Gastrocnemius medialis (tissue), 4 donors: ENCODE measurements at regions of chr2 and their contacts with region 1.

Region 1: GRCh38 chr2:19347619-19348562 is 10.5 kb downstream of the OSR1 start:
- DNase-seq: peak; percentile 85 to 93
- ATAC-seq: peak; percentile 96 to 97
- H3K4me3 ChIP-seq: peak overlapping the region; percentile 89 to 97 (median 94)
- H3K27ac ChIP-seq: peak overlapping the region; percentile 91 to 97 (median 95)
- H3K4me1 ChIP-seq: peaks cover 11 to 13% of the 10 kb centered on the region in 2 donors
- H3K27me3 ChIP-seq: peaks cover 0 to 3% (median 0%) of the 10 kb centered on the region in 3 donors
- CTCF ChIP-seq: peak in 1 of 5 experiments; percentile 10
- POLR2A ChIP-seq: peak; percentile 90 to 91

Region 2: DNA sequence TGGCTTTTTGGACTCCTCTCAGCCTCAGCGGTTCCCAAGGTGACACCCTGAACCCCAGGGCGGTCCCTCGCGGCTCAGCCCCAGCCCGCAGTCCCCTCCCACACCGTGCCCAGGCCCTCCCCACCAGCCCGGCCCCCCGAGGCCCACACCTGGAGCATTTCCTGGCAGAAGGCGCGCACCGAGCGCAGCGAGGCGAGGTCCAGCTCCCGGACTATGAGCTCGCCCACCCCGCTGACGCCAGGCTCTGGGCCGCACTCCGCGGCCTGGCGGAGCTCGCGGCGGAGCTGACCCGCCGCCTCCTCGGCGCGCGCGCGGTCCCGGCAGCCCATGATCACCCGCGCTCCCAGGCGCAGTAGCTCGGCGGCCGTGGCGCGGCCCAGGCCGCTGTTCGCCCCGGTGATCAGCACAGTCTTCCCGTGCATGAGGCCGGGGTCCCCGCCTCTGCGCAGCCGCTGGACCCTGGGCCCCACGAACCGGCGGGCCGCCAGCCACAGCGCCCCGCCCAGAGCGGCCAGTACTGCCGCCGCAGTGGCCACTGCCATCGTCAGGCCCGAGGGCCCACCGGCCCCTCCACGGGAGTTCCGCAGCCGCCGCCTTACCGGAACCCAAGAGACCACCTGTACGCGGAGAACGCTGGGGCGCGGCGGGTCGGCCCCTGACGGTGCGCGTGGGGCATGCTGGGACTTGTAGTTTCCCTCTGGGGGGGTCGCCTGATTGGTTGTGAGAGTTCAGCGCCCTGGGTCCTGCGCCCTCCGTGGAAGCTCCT is 787.7 kb before region 1 on chr2 and contains the start of gene RDH14:
- in situ Hi-C with region 1: loop called in 1 of 4 experiments (anchors 25 kb)
- intact Hi-C with region 1: loop called (anchors 5 kb)
- DNase-seq: peak; percentile 94 to 96
- ATAC-seq: peak; percentile 94 to 96
- H3K4me3 ChIP-seq: peak within 1 kb of the TSS; percentile 65 to 83 (median 74)
- H3K27ac ChIP-seq: peak within 1 kb of the TSS; percentile 89 to 97 (median 92)
- H3K4me1 ChIP-seq: peaks cover 39 to 42% of the 10 kb centered on the region in 2 donors
- H3K27me3 ChIP-seq: no peaks in the 10 kb centered on the region
- CTCF ChIP-seq: no peak
- POLR2A ChIP-seq: peak; percentile 81 to 84
- total RNA-seq, gene RDH14: 24.6 to 55.4 (median 49.8) TPM

Region 3: DNA sequence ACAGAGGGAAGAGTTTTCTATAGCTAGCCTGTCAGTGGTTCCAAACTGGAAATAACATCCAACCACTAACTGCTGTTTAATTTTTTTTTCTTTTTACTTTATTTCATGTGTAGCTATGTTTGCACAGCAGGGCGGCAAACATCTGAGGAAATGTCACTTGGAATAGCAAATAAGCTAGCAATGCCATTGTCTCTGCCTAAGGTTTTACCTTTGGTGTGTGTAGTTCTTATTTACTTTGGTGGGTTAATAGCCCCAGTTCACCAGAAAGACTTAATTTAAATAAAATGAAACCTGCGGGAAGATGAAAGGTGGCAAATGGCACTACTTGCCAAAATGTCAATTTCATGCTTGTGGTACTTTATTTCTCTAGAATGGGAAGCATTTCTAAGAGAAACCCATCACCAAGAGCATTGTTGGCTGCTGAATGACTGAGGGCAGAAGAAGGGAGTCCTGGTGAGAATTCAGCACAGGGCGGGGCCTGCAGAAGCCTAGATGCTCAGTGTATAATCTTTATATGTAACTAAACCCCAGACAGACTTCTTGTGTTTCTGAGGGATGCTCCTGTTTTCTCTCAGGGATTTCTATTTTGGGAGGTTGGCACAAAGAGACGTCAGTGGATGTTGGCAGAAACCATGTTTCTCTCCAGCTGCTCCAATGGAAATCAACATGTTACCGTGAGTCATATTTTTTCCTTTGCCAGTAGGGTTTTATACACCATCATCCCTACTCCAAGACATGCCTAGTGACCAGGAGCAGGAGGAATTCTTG is 458.1 kb before region 1 on chr2:
- in situ Hi-C with region 1: no loop called
- intact Hi-C with region 1: loop called (anchors 5 kb)
- DNase-seq: peak; percentile 18 to 24
- ATAC-seq: peak; percentile 93 to 99
- H3K4me3 ChIP-seq: no peak overlapping the region
- H3K27ac ChIP-seq: peak overlapping the region; percentile 4 to 53 (median 51)
- H3K4me1 ChIP-seq: peaks cover 7 to 17% of the 10 kb centered on the region in 2 donors
- H3K27me3 ChIP-seq: no peaks in the 10 kb centered on the region
- CTCF ChIP-seq: no peak
- POLR2A ChIP-seq: no peak

Region 4: DNA sequence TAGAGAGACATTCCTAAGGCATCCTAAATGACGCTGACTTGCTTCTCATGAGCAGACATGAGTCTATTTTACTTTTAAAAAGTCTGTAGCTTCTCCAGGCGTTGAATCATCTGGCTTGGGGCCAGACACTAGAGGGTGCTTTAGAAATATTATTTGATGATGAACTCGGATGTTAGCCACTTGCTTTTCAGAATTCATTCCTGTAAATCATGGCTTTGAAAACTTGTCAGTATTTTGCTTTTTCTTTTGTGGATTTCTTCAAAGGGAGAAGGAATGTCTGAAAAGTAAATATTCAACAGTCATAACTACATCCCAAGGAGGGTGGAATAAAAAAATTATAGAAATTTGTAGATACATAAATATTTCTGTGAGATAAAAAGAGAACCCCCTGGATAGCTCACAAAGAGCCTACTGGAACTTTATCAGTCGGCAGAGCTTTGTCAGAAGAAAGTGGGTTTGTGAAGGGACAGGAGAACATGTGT is 360.3 kb before region 1 on chr2:
- in situ Hi-C with region 1: loop called in 3 of 4 experiments (anchors 25 kb)
- intact Hi-C with region 1: no loop called
- DNase-seq: peak; percentile 58 to 66
- ATAC-seq: peak; percentile 60 to 85
- H3K4me3 ChIP-seq: no peak overlapping the region
- H3K27ac ChIP-seq: no peak overlapping the region
- H3K4me1 ChIP-seq: peaks cover 5 to 14% of the 10 kb centered on the region in 2 donors
- H3K27me3 ChIP-seq: no peaks in the 10 kb centered on the region
- CTCF ChIP-seq: peak in 2 of 5 experiments; percentile 33 to 42
- POLR2A ChIP-seq: no peak

Region 5: DNA sequence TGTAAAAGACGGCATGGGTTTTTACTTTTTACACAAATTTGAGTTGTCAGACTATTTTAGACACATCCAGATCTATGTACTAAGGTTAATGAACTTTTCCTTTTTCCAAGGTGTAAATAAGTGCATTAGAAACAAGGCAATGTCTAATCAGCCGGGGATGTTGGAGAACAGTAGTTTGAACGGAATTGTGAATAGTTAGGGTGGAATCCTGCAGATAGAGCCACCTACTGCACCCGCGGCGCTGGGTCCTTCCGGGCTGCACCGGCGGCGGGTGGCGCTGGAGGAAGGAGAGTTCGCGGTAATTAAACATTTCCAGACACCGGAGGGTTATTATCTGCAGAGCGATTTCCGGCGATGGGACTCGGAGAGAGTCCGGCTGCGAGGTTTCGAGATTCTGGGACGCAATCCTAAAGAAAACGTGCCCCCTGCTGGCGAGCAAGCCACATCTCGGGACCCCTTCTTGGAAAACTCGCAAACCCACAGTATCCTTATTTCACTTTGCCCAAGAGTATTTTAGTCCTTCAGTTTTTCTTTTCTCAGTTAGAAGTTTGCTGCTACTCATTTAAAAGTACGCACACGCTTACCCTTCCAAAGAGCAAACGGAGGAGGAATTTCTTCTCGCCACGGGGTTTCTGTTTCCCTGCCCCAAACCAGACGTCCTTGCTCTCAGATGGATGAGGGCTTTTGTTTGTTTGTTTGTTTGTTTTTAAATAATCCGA is 15.0 kb after region 1 on chr2:
- in situ Hi-C with region 1: no loop called
- intact Hi-C with region 1: no loop called
- DNase-seq: peak; percentile 52 to 58
- ATAC-seq: peak; percentile 59 to 78
- H3K4me3 ChIP-seq: peak overlapping the region; percentile 58 to 92 (median 62)
- H3K27ac ChIP-seq: peak overlapping the region in 1 of 4 donors; percentile 8
- H3K4me1 ChIP-seq: peaks cover 6 to 30% of the 10 kb centered on the region in 2 donors
- H3K27me3 ChIP-seq: peaks cover 0 to 27% (median 13%) of the 10 kb centered on the region in 3 donors
- CTCF ChIP-seq: peak; percentile 47 to 84 (median 76)
- POLR2A ChIP-seq: no peak

Region 6: DNA sequence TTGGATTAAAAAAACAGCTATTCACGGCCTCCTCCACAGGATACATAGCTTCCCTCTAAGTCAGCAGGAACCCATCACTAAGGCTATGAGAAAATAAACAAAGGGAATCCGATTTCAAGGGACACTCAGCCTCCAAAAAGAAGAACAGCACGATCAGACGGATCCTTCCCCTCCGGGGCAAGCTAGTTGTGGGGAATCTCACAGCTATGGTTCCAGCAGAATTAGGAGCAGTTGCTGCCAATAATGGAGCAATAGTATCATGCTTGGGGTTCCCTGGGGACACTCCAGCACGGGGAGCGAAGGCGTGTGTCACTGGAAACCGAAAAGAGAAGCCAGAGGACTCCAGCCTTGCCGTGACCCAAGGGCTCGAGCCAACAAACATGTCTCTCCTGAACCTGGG is 390.8 kb after region 1 on chr2:
- in situ Hi-C with region 1: no loop called
- intact Hi-C with region 1: loop called (anchors 5 kb)
- DNase-seq: peak; percentile 77 to 82
- ATAC-seq: peak; percentile 76 to 88
- H3K4me3 ChIP-seq: peak overlapping the region in 1 of 4 donors; percentile 6
- H3K27ac ChIP-seq: peak overlapping the region; percentile 80 to 88 (median 81)
- H3K4me1 ChIP-seq: peaks cover 38 to 51% of the 10 kb centered on the region in 2 donors
- H3K27me3 ChIP-seq: no peaks in the 10 kb centered on the region
- CTCF ChIP-seq: no peak
- POLR2A ChIP-seq: no peak

Region 7: GRCh38 chr2:19901442-19902215 is 553.7 kb after region 1 on chr2 and contains the start of gene TTC32:
- in situ Hi-C with region 1: no loop called
- intact Hi-C with region 1: loop called (anchors 5 kb)
- DNase-seq: peak; percentile 88 to 90
- ATAC-seq: peak; percentile 95
- H3K4me3 ChIP-seq: peak within 1 kb of the TSS; percentile 60 to 96 (median 92)
- H3K27ac ChIP-seq: peak within 1 kb of the TSS; percentile 90 to 98 (median 96)
- H3K4me1 ChIP-seq: peaks cover 43 to 49% of the 10 kb centered on the region in 2 donors
- H3K27me3 ChIP-seq: no peaks in the 10 kb centered on the region
- CTCF ChIP-seq: peak in 2 of 5 experiments; percentile 11 to 35
- POLR2A ChIP-seq: peak; percentile 87 to 89
- total RNA-seq, gene TTC32: 6.6 to 19.6 (median 10.7) TPM